K562 (cell line): ENCODE measurements at regions of chr3 and their contacts with region 1.

Region 1: DNA sequence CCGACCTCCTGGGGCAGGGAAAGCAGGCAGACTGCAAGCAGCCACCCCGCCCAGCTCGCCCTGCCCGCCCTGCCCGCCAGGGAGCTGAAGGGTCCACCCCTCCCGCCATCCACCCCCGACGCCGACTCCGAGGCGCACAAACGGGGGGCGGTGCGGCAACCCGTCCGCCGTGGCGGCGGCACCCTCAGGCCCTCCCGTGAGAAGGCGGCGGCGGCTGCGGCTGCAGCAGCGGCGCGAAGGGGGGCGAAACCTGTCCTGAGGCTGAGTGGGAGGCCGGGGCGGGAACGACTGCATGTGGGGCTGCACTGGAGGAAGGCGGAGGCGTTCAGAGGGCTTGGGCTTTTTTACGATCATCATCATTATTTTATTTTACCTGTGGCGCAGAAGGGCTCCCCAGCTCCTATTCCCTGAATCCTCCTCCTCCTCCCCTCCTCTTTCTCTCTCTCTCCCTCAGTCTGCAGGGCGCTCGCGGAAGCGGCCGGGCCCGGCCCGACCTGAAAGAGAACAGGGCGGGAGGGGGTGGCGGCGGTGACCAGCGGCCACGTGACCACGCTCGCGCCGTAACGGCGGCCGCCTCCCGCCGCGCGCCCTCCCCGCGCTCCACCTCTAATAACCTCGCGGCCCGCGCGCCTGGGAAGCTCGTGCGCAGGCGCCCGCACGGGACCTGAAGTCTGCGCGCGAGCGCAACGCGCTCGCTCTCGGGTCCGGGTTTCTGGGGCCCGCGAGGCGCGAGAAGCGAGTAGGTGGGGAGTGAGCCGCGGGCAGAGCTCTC is at the start of gene TBC1D5:
- DNase-seq: peak; percentile 82 to 99 (median 98)
- ATAC-seq: peak; percentile 85
- H3K4me3 ChIP-seq: peak within 1 kb of the TSS; percentile 70
- H3K27ac ChIP-seq: peak within 1 kb of the TSS; percentile 93
- H3K4me1 ChIP-seq: peaks cover 25 to 37% of the 10 kb centered on the region in 2 experiments
- H3K27me3 ChIP-seq: no peaks in the 10 kb centered on the region
- CTCF ChIP-seq: 0 out of 6 replicates have a peak, but pooled peaks of 1 of the 3 experiments have one; percentile 3
- EP300 ChIP-seq: peak; percentile 63
- POLR2A ChIP-seq: peak; percentile 92
- RAD21 ChIP-seq: no peak
- polyA plus RNA-seq, gene TBC1D5: 2.9 to 5.1 TPM

Region 2: GRCh38 chr3:17442332-17443049 is 299.8 kb before region 1 on chr3:
- CTCF ChIA-PET with region 1: no interaction called
- POLR2A ChIA-PET with region 1: no interaction called
- in situ Hi-C with region 1: no loop called
- intact Hi-C with region 1: loop called (anchors 5 kb)
- DNase-seq: peak in 3 of 4 experiments; percentile 11 to 78 (median 46)
- ATAC-seq: peak; percentile 89
- H3K4me3 ChIP-seq: no peak overlapping the region
- H3K27ac ChIP-seq: peak overlapping the region; percentile 70
- H3K4me1 ChIP-seq: peaks cover 0 to 29% of the 10 kb centered on the region in 2 experiments; a peak in 3 of 5 replicates
- H3K27me3 ChIP-seq: no peaks in the 10 kb centered on the region
- CTCF ChIP-seq: no peak
- EP300 ChIP-seq: no peak; the same call in 1 of the 2 replicates
- POLR2A ChIP-seq: no peak
- RAD21 ChIP-seq: no peak; a peak in 1 of 4 replicates

Region 3: DNA sequence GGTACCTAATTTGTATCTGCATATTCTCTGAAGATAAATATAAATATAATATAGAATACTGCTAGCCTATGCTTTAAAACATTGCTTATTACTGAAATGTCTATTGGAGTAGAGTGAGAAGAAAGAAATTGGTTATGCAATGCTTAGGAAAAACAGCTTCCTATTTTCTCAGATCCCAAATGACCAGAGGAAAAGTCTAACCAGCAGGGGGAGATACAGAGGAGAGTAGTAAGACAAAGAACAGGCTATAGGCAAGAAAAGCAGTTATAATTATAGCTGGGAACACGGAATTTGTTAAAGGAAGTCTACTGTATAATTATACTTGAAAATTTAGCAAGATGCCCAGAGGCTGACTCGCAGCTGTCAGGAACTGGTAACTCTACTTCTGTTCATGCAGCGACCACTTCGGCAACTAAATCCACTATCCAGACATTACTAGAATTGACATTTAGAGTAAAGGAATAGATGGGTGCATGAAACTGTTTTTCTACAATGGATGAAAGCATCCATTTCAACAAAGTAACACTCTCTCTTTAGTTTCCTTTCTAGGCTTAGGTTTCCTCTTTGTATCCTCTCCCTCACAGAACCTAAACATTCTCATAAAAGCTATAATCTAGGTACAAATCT is 97.1 kb before region 1 on chr3:
- CTCF ChIA-PET with region 1: no interaction called
- POLR2A ChIA-PET with region 1: no interaction called
- in situ Hi-C with region 1: no loop called
- intact Hi-C with region 1: loop called (anchors 2 kb)
- DNase-seq: peak; percentile 17 to 75 (median 36)
- ATAC-seq: peak; percentile 93
- H3K4me3 ChIP-seq: no peak overlapping the region
- H3K27ac ChIP-seq: no peak overlapping the region
- H3K4me1 ChIP-seq: no peaks in the 10 kb centered on the region
- H3K27me3 ChIP-seq: no peaks in the 10 kb centered on the region
- CTCF ChIP-seq: peak; percentile 64 to 85 (median 74); a peak in 5 of 6 replicates
- EP300 ChIP-seq: no peak
- POLR2A ChIP-seq: no peak
- RAD21 ChIP-seq: peak; percentile 74 to 87

Region 4: DNA sequence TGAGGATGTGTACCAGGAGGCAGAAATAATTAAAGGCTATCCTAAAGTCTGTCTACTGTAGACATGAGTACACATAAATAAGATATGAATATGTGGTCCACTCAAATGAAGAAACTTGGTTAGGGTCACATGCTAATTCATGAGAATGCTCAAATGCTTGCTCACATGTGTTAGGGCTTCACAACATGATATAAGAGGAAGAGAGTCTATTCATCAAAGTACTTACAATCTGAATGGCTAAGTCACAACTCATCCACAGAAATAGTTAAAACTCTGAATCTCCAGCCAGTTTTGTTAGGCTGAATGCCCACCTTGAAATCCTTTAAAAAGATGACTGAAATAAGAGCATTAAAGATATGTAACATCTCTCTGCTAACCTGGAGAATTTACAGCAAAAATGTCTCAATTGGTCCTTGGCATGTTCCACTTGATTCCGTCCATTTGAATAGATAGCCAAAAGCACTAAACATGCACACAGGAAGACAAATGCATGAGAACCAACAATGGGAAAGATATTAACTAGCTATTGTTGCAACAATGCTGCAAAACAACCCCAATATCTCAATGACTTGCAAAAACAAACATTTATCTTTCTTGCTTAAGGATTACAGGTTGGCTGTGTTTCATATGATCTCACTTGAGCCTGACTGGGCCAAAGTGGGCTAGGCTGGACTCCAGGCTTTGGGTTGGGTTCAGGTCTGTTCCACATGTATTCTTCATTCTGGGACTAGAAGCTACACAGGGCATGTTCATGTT is 10.8 kb after region 1 on chr3:
- CTCF ChIA-PET with region 1: no interaction called
- POLR2A ChIA-PET with region 1: interaction called, 17 read pairs
- in situ Hi-C with region 1: no loop called
- intact Hi-C with region 1: no loop called
- DNase-seq: no peak
- ATAC-seq: peak; percentile 50
- H3K4me3 ChIP-seq: no peak overlapping the region
- H3K27ac ChIP-seq: no peak overlapping the region
- H3K4me1 ChIP-seq: peaks cover 3 to 15% of the 10 kb centered on the region in 2 experiments; a peak in 4 of 5 replicates
- H3K27me3 ChIP-seq: no peaks in the 10 kb centered on the region
- CTCF ChIP-seq: no peak
- EP300 ChIP-seq: no peak
- POLR2A ChIP-seq: no peak
- RAD21 ChIP-seq: no peak

Region 5: GRCh38 chr3:17841190-17841828 is 99.0 kb after region 1 on chr3:
- CTCF ChIA-PET with region 1: no interaction called
- POLR2A ChIA-PET with region 1: interaction called, 3 read pairs
- in situ Hi-C with region 1: no loop called
- intact Hi-C with region 1: loop called (anchors 5 kb)
- DNase-seq: peak; percentile 81 to 87 (median 84)
- ATAC-seq: peak; percentile 99
- H3K4me3 ChIP-seq: no peak overlapping the region
- H3K27ac ChIP-seq: no peak overlapping the region
- H3K4me1 ChIP-seq: no peaks in the 10 kb centered on the region
- H3K27me3 ChIP-seq: peaks cover 0 to 5% of the 10 kb centered on the region in 2 experiments; a peak in 3 of 5 replicates
- CTCF ChIP-seq: peak; percentile 98 to 99 (median 99)
- EP300 ChIP-seq: peak; percentile 19; the same call in 1 of the 2 replicates
- POLR2A ChIP-seq: no peak
- RAD21 ChIP-seq: peak; percentile 99